MCF 10A (cell line): ENCODE measurements at regions of chrX and their contacts with region 1.

Region 1: GRCh38 chrX:143664302-143664701 is 28.4 kb upstream of the SLITRK4 start:
- DNase-seq: peak; percentile 51
- H3K4me3 Mint-ChIP-seq: no peak overlapping the region
- H3K27ac Mint-ChIP-seq: no peak overlapping the region
- H3K4me1 Mint-ChIP-seq: peaks cover 3% of the 10 kb centered on the region
- H3K27me3 Mint-ChIP-seq: no peaks in the 10 kb centered on the region
- CTCF ChIP-seq: peak; percentile 55

Region 2: DNA sequence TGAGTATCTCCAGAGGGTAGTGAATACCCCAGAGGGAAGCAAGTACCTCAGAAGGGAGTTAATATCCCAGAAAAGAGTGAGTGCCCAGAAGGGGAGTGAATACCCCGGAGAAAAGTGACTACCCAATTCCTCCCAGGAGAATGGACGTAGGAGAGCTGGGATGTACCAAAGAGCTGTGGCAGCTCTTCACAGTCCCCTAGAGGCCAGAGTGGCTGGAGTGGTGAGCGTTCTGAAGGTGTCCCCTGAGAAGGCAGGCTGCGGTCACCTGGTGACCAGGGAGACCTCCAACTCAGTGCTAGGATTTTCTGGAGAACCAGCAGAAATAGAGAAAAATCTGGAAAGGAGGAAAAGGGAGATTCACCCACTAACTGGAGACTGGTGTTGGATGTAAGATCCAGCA is 631.6 kb before region 1 on chrX:
- CTCF ChIA-PET with region 1: no interaction called
- POLR2A ChIA-PET with region 1: no interaction called
- intact Hi-C with region 1: no loop called
- DNase-seq: no peak
- H3K4me3 Mint-ChIP-seq: no peak overlapping the region
- H3K27ac Mint-ChIP-seq: no peak overlapping the region
- H3K4me1 Mint-ChIP-seq: no peaks in the 10 kb centered on the region
- H3K27me3 Mint-ChIP-seq: no peaks in the 10 kb centered on the region
- CTCF ChIP-seq: no peak

Region 3: GRCh38 chrX:143437439-143437838 is 226.9 kb before region 1 on chrX:
- CTCF ChIA-PET with region 1: interaction called, 7 read pairs
- POLR2A ChIA-PET with region 1: interaction called, 5 read pairs
- intact Hi-C with region 1: loop called (anchors 1 kb)
- DNase-seq: peak; percentile 52
- H3K4me3 Mint-ChIP-seq: no peak overlapping the region
- H3K27ac Mint-ChIP-seq: no peak overlapping the region
- H3K4me1 Mint-ChIP-seq: no peaks in the 10 kb centered on the region
- H3K27me3 Mint-ChIP-seq: no peaks in the 10 kb centered on the region
- CTCF ChIP-seq: peak; percentile 51

Region 4: DNA sequence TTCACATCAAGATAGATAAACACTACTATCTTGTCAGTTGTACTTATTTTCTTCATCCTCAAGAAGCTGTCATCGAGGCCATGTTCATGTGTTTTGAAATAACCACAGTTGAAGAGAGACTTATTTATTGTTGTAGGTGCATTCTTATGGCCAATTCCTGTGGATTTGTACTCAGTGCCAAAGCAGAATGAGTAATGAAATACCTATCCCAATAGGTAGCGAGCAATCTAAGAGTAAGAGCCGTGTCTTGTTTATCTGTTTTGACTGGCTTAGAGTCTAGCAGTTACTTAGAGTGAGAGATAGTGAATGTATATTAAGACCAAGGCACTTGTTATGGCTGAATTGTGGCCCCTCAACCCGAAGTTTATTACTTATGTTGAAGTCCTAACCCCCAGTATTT is 952.0 kb after region 1 on chrX:
- CTCF ChIA-PET with region 1: no interaction called
- POLR2A ChIA-PET with region 1: no interaction called
- intact Hi-C with region 1: loop called (anchors 10 kb)
- DNase-seq: peak; percentile 60
- H3K4me3 Mint-ChIP-seq: no peak overlapping the region
- H3K27ac Mint-ChIP-seq: peak overlapping the region; percentile 92
- H3K4me1 Mint-ChIP-seq: peaks cover 15% of the 10 kb centered on the region
- H3K27me3 Mint-ChIP-seq: no peaks in the 10 kb centered on the region
- CTCF ChIP-seq: no peak